Activated CD4-positive, alpha-beta T cell treated with anti-CD3 and anti-CD28 coated beads for 36 hours (primary cell): ENCODE measurements at regions of chr6 and their contacts with region 1.

Region 1: GRCh38 chr6:156776840-156777576 is at the start of gene ARID1B:
- DNase-seq: peak; percentile 82
- ATAC-seq: peak; percentile 32
- H3K4me3 Mint-ChIP-seq: peak within 1 kb of the TSS; percentile 85
- H3K27ac Mint-ChIP-seq: peak within 1 kb of the TSS; percentile 98
- H3K4me1 Mint-ChIP-seq: peaks cover 13% of the 10 kb centered on the region
- H3K27me3 Mint-ChIP-seq: no peaks in the 10 kb centered on the region
- total RNA-seq, gene ARID1B: 42.2 to 53.6 TPM

Region 2: GRCh38 chr6:155314092-155314772 is 1462.8 kb before region 1 on chr6 and contains the start of gene TFB1M:
- CTCF ChIA-PET with region 1: no interaction called
- POLR2A ChIA-PET with region 1: no interaction called
- intact Hi-C with region 1: loop called (anchors 2 to 10 kb)
- DNase-seq: peak; percentile 99
- ATAC-seq: peak; percentile 95
- H3K4me3 Mint-ChIP-seq: peak within 1 kb of the TSS; percentile 90
- H3K27ac Mint-ChIP-seq: peak within 1 kb of the TSS; percentile 98
- H3K4me1 Mint-ChIP-seq: peaks cover 39% of the 10 kb centered on the region
- H3K27me3 Mint-ChIP-seq: no peaks in the 10 kb centered on the region
- total RNA-seq, gene TFB1M: 45.5 to 56.4 TPM

Region 3: DNA sequence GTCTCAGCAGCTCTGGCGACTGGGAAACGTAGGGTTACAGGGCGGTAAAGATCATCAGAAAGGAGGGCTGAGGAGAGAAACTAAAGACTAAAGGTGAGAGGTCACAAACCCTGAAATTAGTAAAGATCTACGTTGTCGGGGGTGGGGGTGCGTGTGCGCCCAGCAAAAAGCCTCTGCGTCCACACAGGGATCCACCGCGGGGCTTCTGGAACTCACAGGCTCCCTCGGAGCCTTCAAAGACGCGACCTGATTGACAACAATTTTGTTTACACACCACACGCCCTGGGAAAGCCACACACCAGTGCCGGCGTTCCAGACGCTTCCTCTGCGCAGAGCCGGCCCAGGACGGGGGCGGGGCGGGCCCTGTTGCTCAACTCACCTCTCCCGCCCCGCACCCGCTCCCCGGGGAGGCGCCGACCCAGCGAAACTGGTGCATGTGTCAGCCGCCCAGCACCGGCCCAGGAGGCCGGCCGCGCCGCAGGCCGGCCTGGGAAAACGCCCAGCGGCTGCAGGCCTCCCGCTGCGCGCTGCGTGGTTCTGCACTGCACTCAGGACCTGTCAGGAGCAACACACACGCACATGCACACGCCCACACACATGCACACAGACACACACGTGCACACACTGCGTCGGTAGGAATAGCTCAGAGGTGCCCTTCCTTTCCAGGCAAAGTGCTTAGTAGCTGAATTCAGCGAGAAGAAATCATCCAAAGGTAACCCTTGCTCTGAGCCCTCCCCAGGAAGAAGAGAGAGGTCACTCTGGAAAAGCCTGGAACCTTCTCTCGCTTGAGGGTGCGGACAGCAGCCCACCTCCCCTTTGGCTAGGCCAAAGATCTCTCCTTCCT is 57.1 kb before region 1 on chr6:
- CTCF ChIA-PET with region 1: interaction called, 3 read pairs
- POLR2A ChIA-PET with region 1: no interaction called
- intact Hi-C with region 1: loop called in 1 of 2 experiments (anchors 2 kb)
- DNase-seq: peak; percentile 83
- ATAC-seq: peak; percentile 85
- H3K4me3 Mint-ChIP-seq: peak overlapping the region; percentile 63
- H3K27ac Mint-ChIP-seq: peak overlapping the region; percentile 81
- H3K4me1 Mint-ChIP-seq: peaks cover 20% of the 10 kb centered on the region
- H3K27me3 Mint-ChIP-seq: no peaks in the 10 kb centered on the region

Region 4: GRCh38 chr6:156760377-156760776 is 16.6 kb before region 1 on chr6:
- CTCF ChIA-PET with region 1: no interaction called
- POLR2A ChIA-PET with region 1: no interaction called
- intact Hi-C with region 1: no loop called
- DNase-seq: no peak
- ATAC-seq: no peak
- H3K4me3 Mint-ChIP-seq: no peak overlapping the region
- H3K27ac Mint-ChIP-seq: no peak overlapping the region
- H3K4me1 Mint-ChIP-seq: no peaks in the 10 kb centered on the region
- H3K27me3 Mint-ChIP-seq: peaks cover 8% of the 10 kb centered on the region

Region 5: DNA sequence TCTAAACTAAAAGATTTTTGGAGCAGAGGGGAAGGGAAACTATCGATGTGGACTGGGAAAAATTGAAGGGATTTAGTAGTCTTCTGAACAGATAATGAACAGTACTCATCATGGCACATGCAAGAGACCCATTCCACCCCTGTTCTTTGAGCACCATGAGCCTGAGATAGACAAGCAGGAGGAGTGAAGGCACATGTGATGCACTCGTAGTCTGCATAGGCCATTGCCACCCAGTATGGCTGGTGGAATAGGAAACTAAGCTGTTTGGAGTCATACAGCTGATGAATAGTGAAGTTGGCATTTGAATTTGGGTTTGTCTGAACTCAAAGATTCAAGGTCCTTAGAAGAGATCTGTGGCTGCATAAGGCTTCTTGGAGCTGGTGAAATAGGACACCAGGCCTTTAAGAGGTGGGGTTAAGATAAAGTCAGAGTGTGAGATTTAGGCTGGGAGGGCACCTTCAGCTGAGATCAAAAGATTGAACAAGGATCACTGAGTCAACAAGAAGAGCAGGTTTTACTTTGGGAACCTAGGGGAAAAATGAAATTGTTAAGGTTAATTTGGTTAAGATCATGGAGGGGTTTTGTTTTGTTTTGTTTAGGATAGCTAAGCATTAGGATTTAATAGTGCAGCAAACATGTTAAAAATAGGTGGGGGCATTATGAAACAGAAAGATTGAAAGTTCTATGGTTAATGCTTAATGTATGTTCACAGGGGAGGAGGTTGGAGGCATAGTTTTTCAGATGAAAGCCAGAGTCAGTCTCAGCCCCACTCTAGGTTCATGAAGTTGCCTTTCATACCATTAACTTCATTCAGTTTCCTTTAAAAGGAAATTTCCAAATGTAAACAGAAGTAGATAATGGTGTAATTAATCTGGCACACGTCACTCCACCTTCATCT is 149.0 kb after region 1 on chr6:
- CTCF ChIA-PET with region 1: no interaction called
- POLR2A ChIA-PET with region 1: interaction called, 3 read pairs
- intact Hi-C with region 1: loop called (anchors 5 kb)
- DNase-seq: no peak
- ATAC-seq: peak; percentile 57
- H3K4me3 Mint-ChIP-seq: no peak overlapping the region
- H3K27ac Mint-ChIP-seq: no peak overlapping the region
- H3K4me1 Mint-ChIP-seq: peaks cover 60% of the 10 kb centered on the region
- H3K27me3 Mint-ChIP-seq: no peaks in the 10 kb centered on the region

Region 6: DNA sequence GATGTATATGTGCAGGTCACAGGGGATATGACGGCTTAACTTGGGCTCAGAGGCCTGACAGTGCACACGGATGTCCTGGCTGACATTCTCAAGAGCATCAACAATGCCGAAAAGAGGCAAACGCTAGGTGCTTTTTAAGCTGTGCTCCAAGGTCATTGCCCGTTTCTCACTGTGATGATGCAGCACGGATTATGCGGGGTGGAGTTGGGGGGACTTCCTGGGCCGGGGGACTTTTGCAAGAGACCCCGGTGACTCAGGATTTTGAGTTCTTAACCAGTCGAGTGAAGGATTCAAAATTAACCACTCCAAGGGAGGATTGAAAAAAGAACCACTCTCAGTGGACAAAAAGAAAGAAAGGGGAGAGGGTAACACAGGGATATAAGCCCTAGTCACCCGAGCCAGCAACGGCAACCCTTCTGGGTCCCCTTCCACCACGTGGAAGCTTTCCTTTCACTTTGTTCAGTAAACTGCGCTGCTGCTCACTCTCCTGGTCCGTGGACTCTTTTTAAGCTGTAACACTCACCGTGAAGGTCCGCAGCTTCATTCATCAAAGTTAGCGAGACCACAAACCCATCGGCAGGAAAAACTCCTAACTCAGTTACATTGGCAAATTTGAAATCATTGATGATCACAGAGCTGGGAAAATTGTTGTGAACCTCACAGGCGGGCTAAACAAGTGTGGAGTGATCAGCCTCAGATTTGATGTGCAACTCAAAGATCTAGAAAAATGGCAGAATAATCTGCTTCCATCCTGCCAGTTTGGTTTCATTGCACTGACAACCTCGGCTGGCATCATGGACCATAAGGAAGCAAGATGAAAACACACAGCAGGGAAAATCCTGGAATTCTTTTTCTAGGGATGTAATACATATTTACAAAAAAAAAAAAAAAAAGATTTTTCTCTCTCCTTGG is 199.5 kb after region 1 on chr6:
- CTCF ChIA-PET with region 1: no interaction called
- POLR2A ChIA-PET with region 1: no interaction called
- intact Hi-C with region 1: loop called in 1 of 2 experiments (anchors 5 kb)
- DNase-seq: peak; percentile 25
- ATAC-seq: peak; percentile 25
- H3K4me3 Mint-ChIP-seq: peak overlapping the region; percentile 58
- H3K27ac Mint-ChIP-seq: peak overlapping the region; percentile 47
- H3K4me1 Mint-ChIP-seq: peaks cover 86% of the 10 kb centered on the region
- H3K27me3 Mint-ChIP-seq: no peaks in the 10 kb centered on the region

Region 7: GRCh38 chr6:157107915-157108651 is 331.1 kb after region 1 on chr6:
- CTCF ChIA-PET with region 1: interaction called, 3 read pairs
- POLR2A ChIA-PET with region 1: no interaction called
- intact Hi-C with region 1: loop called (anchors 5 kb)
- DNase-seq: peak; percentile 42
- ATAC-seq: peak; percentile 87
- H3K4me3 Mint-ChIP-seq: no peak overlapping the region
- H3K27ac Mint-ChIP-seq: peak overlapping the region; percentile 38
- H3K4me1 Mint-ChIP-seq: peaks cover 53% of the 10 kb centered on the region
- H3K27me3 Mint-ChIP-seq: no peaks in the 10 kb centered on the region

Region 8: DNA sequence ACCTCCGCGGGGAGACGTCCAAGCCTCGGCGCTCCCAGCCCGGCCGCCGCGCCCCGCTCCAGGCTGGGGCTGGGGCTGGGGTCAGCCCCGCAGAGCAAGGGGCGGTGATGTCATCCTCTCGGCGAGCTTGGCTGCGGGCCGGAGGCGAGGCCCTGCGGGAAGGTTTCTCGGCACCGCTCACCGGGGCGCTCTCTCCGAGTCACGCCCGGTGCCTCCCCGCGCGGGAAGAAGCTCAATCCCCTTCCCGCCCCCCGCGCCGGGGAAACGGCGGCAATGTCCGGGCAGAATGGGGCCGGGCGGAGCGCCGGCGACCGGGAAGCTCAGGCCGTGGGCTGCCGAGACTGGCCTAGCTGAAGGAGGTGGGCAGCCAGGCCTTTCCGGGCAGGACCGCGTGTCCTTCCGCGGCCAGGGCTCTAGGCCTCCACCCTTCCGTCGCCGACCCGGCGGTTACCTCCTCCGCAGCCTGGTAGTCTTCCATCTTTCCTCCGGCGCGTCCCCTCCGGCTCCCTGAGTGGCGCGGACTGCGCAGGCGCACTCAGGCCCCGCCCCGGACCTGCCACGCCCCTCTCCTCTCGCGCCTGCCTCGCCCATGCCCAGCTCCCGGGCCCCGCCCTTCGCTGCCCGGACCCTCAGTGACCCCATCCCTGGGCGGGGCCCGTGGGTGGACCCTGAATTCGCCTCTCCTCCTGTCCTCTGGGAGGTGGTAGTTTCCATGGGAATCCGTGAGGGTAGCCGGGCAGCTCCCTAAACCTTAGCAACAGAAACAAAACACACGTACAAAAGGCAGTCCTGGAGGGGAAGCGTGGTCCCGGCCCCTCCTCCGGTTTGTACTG is 1867.4 kb after region 1 on chr6 and contains the start of gene DYNLT1:
- CTCF ChIA-PET with region 1: no interaction called
- POLR2A ChIA-PET with region 1: no interaction called
- intact Hi-C with region 1: loop called in 1 of 2 experiments (anchors 10 kb)
- DNase-seq: peak; percentile 94
- ATAC-seq: peak; percentile 43
- H3K4me3 Mint-ChIP-seq: peak within 1 kb of the TSS; percentile 99
- H3K27ac Mint-ChIP-seq: peak within 1 kb of the TSS; percentile 99
- H3K4me1 Mint-ChIP-seq: peaks cover 77% of the 10 kb centered on the region
- H3K27me3 Mint-ChIP-seq: no peaks in the 10 kb centered on the region
- total RNA-seq, gene DYNLT1: 116 to 118 TPM